Psoas muscle (tissue), 8 donors: ENCODE measurements at regions of chr22 and their contacts with region 1.

Region 1: DNA sequence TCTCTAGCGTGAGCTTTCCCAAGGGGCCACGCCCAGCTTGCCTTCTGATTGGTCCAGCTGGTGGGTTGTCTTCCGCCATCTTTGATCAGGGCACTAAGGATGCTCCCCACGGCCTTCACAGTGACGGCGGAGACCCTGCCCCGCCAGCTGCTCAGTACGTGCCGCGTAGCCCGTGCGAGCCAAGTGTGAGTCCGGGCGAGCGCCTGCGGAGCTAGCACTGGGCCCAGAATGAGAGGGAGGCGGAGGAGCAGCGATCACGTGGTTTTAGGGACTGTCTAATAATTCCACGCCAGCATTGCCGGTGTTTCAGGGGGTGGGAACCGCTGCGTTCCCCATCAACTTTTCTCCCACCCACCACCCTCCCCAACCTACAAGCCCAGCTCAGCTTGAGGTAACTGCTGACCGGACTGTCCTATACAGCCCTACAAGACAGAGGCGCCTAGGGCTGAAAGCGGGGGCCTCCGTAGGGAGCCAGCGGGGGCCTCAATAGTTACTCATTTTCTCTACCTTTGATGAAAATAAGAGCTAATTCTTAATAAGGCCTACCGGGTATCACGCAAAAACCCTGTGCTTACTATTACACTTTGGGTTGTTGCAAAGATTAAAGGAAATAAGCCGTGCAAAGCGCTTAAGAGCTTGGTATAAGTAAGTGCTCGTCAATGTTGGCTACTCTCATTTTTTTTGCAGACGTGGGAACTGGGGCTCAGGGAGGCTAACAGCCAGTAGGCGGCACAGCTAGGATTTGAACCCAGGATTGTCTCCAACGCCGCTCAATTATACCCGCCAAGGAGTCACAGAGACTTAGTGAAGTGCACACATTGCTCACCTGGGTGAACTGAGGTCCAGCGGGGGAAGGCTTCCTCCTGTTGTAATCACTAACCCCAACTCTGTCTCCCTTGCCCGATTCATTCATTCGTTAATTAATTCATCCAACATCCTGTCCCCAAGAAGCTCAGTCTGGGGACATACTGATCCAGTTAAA is 1.3 kb upstream of the MTFP1 start:
- DNase-seq: peak; percentile 99
- ATAC-seq: peak; percentile 84 to 93 (median 88)
- H3K4me3 ChIP-seq: peak overlapping the region; percentile 83
- H3K27ac ChIP-seq: peak overlapping the region; percentile 97
- H3K4me1 ChIP-seq: peaks cover 24% of the 10 kb centered on the region
- H3K27me3 ChIP-seq: no peaks in the 10 kb centered on the region
- CTCF ChIP-seq: no peak

Region 2: DNA sequence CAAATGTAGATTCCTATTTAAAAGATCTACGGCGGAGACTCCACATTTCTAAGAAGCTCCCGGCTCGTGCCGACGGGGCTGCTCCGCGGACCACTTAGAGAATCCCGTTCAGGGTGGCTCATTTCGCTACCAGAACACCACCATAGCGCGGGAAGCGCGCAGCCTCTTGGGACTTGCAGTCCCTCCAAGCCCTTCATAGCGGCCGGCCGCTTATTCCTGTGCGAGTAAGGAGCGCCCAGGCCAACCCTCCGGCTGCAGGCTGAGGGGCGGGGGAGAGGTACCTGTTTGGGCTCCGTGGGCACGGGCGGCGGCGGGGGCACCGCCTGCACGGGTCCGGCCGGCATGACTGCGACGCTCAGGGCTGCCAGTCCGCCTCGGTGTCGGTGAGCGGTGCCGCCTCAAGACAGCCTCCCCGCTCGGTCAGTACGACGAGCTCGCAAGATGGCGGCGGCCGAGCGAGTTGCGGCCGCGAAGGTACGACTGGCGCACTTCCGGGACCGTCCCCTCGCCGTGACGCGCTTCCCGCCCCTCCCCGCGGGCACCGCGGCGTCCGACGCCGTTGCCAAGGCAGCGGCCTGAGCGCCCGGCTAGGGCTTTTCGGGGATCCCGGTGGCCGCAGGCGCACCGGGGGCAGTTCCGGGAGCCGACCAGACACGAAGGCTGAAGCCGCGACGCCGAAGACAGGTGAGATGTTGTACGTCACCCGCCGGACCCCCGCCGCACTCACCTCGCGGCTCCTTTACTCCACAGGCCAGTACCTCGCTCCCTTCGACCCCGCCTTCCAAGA is 67.6 kb before region 1 on chr22 and contains the starts of genes CCDC157 and SF3A1:
- intact Hi-C with region 1: loop called in 1 of 2 experiments (anchors 10 kb)
- DNase-seq: peak; percentile 89 to 94
- ATAC-seq: peak; percentile 98 to 99 (median 98)
- H3K4me3 ChIP-seq: peak within 1 kb of the TSS; percentile 83
- H3K27ac ChIP-seq: peak within 1 kb of the TSS; percentile 98
- H3K4me1 ChIP-seq: peaks cover 25% of the 10 kb centered on the region
- H3K27me3 ChIP-seq: no peaks in the 10 kb centered on the region
- CTCF ChIP-seq: no peak
- total RNA-seq, gene CCDC157: 0.17 to 0.88 (median 0.54) TPM
- total RNA-seq, gene SF3A1: 107 to 146 (median 121) TPM

Region 3: DNA sequence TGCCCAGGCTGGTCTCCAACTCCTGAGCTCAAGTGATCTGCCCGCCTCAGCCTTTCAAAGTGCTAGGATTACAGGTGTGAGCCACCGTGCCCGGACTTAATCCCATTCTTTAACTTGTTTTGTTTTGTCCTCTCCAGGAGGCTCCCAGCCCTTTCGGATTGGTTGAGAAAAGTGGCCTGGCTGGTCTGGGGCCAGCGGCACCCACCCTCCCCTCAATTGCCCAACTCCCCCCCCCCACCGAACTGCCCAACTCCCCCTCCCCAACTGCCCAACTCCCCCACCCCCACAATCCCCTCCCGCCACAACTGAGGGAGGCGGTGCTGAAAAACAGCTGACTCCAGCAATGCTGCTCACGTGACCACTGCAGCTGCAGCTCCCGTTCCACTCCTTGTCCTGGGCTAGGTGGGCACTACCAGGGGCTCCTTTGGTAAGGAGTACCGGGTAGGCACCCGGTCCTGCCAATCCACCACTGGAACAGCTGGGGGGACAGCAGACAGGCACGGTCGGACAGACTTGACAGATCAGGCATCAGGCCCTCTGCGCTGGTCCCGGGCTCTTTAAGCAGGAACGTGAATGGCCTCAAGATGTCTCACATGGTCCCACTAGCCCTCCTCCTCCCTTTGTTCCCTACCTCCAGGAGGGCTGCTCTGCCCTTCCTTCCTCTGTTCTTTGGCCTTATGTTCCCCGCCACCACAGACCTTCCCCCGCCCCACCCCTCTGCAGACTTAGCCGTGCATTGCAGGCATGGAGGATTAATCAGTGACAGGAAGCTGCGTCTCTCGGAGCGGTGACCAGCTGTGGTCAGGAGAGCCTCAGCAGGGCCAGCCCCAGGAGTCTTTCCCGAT is 182.4 kb after region 1 on chr22 and contains the start of gene TCN2:
- intact Hi-C with region 1: loop called in 1 of 2 experiments (anchors 10 kb)
- DNase-seq: peak; percentile 66 to 78
- ATAC-seq: peak; percentile 83 to 93 (median 86)
- H3K4me3 ChIP-seq: peak within 1 kb of the TSS; percentile 86
- H3K27ac ChIP-seq: peak within 1 kb of the TSS; percentile 80
- H3K4me1 ChIP-seq: peaks cover 34% of the 10 kb centered on the region
- H3K27me3 ChIP-seq: no peaks in the 10 kb centered on the region
- CTCF ChIP-seq: no peak
- total RNA-seq, gene TCN2: 5.5 to 11.7 (median 9.0) TPM